AG04449 (cell line): ENCODE measurements at regions of chr11 and their contacts with region 1.

Region 1: GRCh38 chr11:33857933-33858371 is 33.9 kb downstream of the LMO2 start:
- DNase-seq: no peak
- H3K4me3 ChIP-seq: no peak overlapping the region
- CTCF ChIP-seq: peak; percentile 90

Region 2: DNA sequence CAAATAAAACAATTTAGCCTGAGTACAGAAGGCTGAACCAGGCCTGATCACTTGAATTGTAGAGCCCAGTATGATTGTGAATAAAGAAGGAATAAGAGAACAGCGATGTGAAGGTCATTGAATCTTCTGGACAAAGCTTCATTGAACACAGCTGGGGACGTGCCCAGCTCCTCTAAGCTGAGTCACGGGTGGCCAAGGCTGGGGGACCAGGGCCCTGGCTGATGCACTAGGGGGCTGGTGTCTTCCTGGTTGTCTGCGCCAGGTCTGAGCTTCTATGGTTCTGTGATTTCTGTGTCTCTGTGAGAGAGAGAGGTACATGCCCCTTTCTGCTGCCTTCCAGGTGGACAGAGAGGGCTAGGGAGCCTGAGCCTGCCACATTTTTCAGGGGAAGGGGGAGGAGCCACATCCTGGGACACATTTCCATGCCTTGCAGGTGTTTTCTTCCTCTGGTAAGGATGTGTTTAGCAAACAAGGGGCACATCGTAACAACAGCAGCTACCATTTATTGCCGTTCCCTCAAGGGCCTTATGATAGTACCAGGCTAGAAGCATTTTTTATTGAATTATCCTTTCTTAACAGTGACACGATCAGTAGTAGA is 293.0 kb before region 1 on chr11:
- CTCF ChIA-PET with region 1: no interaction called
- POLR2A ChIA-PET with region 1: no interaction called
- DNase-seq: no peak
- H3K4me3 ChIP-seq: no peak overlapping the region
- CTCF ChIP-seq: no peak

Region 3: GRCh38 chr11:33868647-33869461 is 10.9 kb after region 1 on chr11:
- CTCF ChIA-PET with region 1: interaction called, 35 read pairs
- POLR2A ChIA-PET with region 1: no interaction called
- DNase-seq: no peak
- H3K4me3 ChIP-seq: no peak overlapping the region
- CTCF ChIP-seq: no peak

Region 4: DNA sequence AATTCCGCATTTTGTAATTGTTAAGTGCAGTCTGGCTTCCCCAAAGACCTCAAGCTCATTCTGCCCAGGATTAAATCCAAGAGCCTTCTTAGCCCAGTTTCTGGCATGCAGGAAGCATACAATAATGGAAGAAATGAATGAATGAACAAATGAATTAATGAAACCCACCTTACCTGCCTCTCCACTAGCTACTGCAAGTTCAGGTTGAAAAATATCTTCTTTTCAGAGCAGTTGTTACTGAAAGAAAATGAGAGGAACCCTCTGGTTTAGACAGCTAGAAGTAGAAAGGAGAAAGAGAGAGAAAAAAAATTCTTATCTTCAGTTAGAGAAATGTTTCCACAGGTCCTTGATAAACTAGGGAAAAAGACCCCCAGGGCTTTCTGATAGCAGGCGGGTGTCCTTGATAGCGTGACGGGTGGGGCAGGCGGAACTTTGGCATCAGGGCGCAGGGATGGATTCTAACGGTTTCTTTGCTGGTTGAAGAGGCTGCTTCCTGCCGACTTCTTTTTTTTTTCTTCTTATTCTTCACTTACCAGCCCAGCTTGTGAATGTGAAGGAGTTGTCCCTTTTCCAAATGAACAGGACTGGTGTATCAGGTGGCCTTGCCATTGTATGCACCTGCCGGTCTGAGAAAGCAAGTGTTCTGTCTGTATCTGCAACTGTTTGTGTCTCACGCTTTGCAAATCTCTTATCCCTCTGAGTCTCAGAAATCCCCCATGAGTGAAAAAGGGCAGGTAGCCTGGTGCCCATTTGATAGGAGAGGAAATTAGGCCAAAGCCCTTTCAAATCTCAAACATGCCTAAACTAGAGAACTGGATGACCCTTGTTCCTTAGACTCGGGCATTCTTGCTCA is 23.9 kb after region 1 on chr11:
- CTCF ChIA-PET with region 1: interaction called, 18 read pairs
- POLR2A ChIA-PET with region 1: no interaction called
- DNase-seq: no peak
- H3K4me3 ChIP-seq: no peak overlapping the region
- CTCF ChIP-seq: no peak

Region 5: DNA sequence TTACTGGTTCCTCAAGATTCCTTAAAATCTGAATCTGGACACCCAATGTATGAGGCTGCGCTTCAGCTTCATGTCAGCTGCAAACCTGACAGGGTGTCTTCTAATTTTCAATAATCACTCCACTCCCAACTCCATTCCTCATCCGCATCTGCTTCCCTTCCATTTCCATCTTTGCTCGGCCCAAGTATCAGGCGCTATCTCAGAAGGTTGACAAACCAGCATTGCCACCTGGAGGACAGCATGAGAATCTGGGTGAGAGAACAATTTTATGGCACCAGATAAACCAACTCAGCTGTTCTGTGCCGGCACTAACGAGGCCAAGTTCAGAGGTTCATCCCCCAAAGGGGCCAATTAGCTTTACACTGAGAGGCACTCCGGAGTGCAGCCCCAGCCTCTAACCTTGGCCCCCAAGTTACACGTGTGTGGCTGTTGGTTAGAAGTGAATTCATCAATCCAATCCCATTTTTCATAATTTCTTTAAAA is 113.1 kb after region 1 on chr11:
- CTCF ChIA-PET with region 1: interaction called, 261 read pairs
- POLR2A ChIA-PET with region 1: no interaction called
- DNase-seq: no peak
- H3K4me3 ChIP-seq: no peak overlapping the region
- CTCF ChIP-seq: peak; percentile 69

Region 6: GRCh38 chr11:33982661-33983060 is 124.7 kb after region 1 on chr11:
- CTCF ChIA-PET with region 1: interaction called, 261 read pairs
- POLR2A ChIA-PET with region 1: no interaction called
- DNase-seq: no peak
- H3K4me3 ChIP-seq: no peak overlapping the region
- CTCF ChIP-seq: no peak

Region 7: GRCh38 chr11:33996498-33997454 is 138.8 kb after region 1 on chr11:
- CTCF ChIA-PET with region 1: interaction called, 12 read pairs
- POLR2A ChIA-PET with region 1: no interaction called
- DNase-seq: no peak
- H3K4me3 ChIP-seq: no peak overlapping the region
- CTCF ChIP-seq: peak; percentile 76